ENCODE measurements at regions of chr14 and their contacts with region 1.

Region 1: DNA sequence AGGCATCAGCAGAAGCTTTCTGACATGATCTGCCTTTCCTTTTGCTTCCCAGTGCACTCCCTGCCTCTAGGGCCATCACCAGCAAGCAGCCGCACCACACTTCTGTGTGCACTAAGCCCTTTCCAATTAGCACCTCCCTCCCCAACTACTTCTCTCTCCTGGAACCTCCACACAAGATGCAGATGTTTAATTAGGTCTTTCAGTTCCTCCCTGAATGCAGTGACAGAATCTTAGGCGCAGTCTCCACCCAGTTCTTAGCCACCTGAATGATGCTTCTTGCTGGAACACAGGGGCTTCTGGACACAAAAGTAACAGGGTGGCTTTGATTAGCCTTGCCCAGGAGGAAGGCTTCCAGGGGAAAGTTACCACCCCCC is 32.9 kb downstream of the NIN start:
- DNase-seq: peak; percentile 81
- H3K4me3 ChIP-seq: peak overlapping the region; percentile 15
- H3K27ac ChIP-seq: peak overlapping the region; percentile 61
- H3K4me1 ChIP-seq: peaks cover 73% of the 10 kb centered on the region
- CTCF ChIP-seq: no peak

Region 2: DNA sequence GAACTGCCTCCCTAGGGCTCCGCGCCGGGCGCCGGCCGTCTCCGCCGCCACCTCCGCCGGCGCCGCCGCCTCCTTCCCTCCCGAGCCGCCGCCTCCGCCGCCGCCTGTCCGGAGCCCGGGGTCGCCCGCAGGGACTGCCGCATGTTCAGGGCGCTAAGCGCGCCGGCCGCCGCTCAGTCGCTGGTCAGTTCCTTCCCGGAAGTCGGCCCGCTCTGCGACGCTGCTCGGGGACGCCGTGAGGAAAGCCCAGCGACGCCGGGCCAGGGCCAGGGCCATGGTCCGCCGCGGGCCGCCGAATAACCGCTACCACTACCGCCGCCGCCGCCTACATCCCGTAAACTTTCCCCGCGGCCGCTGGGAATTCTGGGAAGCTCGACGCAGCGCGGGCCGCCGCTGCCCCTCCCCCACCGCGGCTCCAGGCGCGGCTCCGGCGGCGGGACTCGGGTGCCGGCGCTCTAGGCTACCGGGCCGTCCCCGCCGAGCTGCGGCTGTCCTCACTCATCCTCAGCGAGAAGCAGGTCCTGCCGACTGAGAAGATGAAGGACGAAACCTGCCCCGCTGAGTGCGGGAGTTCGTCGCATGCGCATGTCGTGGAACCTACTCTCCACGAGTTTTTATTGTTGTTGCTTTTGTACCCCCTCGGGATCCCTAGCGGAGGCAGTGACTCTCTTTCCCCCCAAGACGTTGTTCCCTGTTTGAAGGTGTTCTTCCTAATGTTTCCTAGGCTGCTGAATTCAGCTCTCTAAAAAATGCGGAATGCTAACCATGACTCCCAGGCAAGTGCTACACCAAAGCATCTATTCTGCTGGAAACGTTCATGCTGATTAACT is 129.8 kb before region 1 on chr14 and contains the start of gene SAV1:
- CTCF ChIA-PET with region 1: no interaction called
- POLR2A ChIA-PET with region 1: interaction called, 13 read pairs
- intact Hi-C with region 1: no loop called
- DNase-seq: peak; percentile 65
- H3K4me3 ChIP-seq: peak within 1 kb of the TSS; percentile 92
- H3K27ac ChIP-seq: peak within 1 kb of the TSS; percentile 40
- H3K4me1 ChIP-seq: peaks cover 22% of the 10 kb centered on the region
- CTCF ChIP-seq: 0 out of 2 replicates have a peak, but pooled peaks have one; percentile 9
- total RNA-seq, gene SAV1: 6.7 and 10.4 TPM in 2 replicates

Region 3: GRCh38 chr14:50830932-50831725 is 33.1 kb after region 1 on chr14 and contains the start of gene NIN:
- CTCF ChIA-PET with region 1: interaction called, 9 read pairs
- POLR2A ChIA-PET with region 1: interaction called, 404 read pairs
- intact Hi-C with region 1: no loop called
- DNase-seq: peak; percentile 87
- H3K4me3 ChIP-seq: peak within 1 kb of the TSS; percentile 71
- H3K27ac ChIP-seq: peak within 1 kb of the TSS; percentile 74
- H3K4me1 ChIP-seq: peaks cover 66% of the 10 kb centered on the region
- CTCF ChIP-seq: no peak
- total RNA-seq, gene NIN: 79.5 and 95.3 TPM in 2 replicates

Region 4: GRCh38 chr14:51239813-51240803 is 442.1 kb after region 1 on chr14 and contains the start of gene TMX1:
- CTCF ChIA-PET with region 1: no interaction called
- POLR2A ChIA-PET with region 1: no interaction called
- intact Hi-C with region 1: loop called (anchors 10 kb)
- DNase-seq: peak; percentile 97
- H3K4me3 ChIP-seq: peak within 1 kb of the TSS; percentile 98
- H3K27ac ChIP-seq: peak within 1 kb of the TSS; percentile 60
- H3K4me1 ChIP-seq: peaks cover 44% of the 10 kb centered on the region
- CTCF ChIP-seq: peak; percentile 37; the same call in 1 of the 2 replicates
- total RNA-seq, gene TMX1: 33.6 and 34.3 TPM in 2 replicates

Measured in OCI-LY7 (cell line).